Breast epithelium (tissue), 4 donors: ENCODE measurements at regions of chr1 and their contacts with region 1.

Region 1: GRCh38 chr1:12014141-12014991 is 4.9 kb upstream of the MIIP start:
- DNase-seq: no peak
- H3K4me3 ChIP-seq: no peak overlapping the region
- H3K27ac ChIP-seq: peak overlapping the region in 1 of 2 donors; percentile 12
- H3K4me1 ChIP-seq: no peaks in the 10 kb centered on the region
- H3K27me3 ChIP-seq: no peaks in the 10 kb centered on the region
- CTCF ChIP-seq: no peak
- POLR2A ChIP-seq: no peak

Region 2: GRCh38 chr1:12029720-12030339 is 15.5 kb after region 1 on chr1:
- intact Hi-C with region 1: no loop called
- DNase-seq: no peak
- H3K4me3 ChIP-seq: no peak overlapping the region
- H3K27ac ChIP-seq: no peak overlapping the region
- H3K4me1 ChIP-seq: no peaks in the 10 kb centered on the region
- H3K27me3 ChIP-seq: no peaks in the 10 kb centered on the region
- CTCF ChIP-seq: no peak
- POLR2A ChIP-seq: no peak

Region 3: DNA sequence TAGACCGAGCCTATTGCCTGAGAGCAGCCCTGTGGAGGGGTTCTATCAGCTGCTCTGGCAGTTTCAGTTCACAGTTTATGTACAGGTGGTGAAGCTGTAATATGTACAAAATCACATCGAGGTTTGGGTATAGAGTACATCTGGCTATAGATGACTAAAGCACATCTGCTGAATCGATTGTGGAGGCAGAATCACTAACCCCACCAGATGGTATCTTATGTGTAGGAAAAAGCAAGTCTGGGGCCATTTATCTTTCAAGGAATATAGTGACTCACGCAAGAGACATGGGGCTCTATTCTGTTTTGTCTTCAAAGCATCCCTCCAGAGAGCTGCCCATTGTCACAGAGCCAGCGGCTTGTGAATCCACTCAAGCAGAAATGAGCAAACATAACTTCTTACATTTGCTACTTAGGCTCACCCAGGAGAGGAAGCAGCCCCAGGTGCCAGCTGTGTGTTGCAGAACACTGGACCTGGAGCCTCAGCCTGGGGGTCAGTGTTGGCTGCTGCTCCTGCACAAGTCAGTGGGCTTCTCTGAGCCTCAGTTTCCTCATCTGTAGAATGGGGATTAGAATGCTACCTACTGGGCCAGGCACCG is 26.2 kb after region 1 on chr1:
- intact Hi-C with region 1: no loop called
- DNase-seq: no peak
- H3K4me3 ChIP-seq: no peak overlapping the region
- H3K27ac ChIP-seq: no peak overlapping the region
- H3K4me1 ChIP-seq: no peaks in the 10 kb centered on the region
- H3K27me3 ChIP-seq: no peaks in the 10 kb centered on the region
- CTCF ChIP-seq: no peak
- POLR2A ChIP-seq: no peak

Region 4: GRCh38 chr1:12067900-12068821 is 53.8 kb after region 1 on chr1:
- intact Hi-C with region 1: loop called (anchors 2 kb)
- DNase-seq: no peak
- H3K4me3 ChIP-seq: no peak overlapping the region
- H3K27ac ChIP-seq: peak overlapping the region in 1 of 2 donors; percentile 35
- H3K4me1 ChIP-seq: peaks cover 0 to 5% of the 10 kb centered on the region in 2 donors
- H3K27me3 ChIP-seq: peaks cover 3 to 35% of the 10 kb centered on the region in 2 donors
- CTCF ChIP-seq: no peak
- POLR2A ChIP-seq: no peak

Region 5: GRCh38 chr1:12272770-12273169 is 258.4 kb after region 1 on chr1:
- intact Hi-C with region 1: no loop called
- DNase-seq: no peak
- H3K4me3 ChIP-seq: no peak overlapping the region
- H3K27ac ChIP-seq: no peak overlapping the region
- H3K4me1 ChIP-seq: no peaks in the 10 kb centered on the region
- H3K27me3 ChIP-seq: no peaks in the 10 kb centered on the region
- CTCF ChIP-seq: no peak
- POLR2A ChIP-seq: no peak

Region 6: GRCh38 chr1:13494025-13494424 is 1479.7 kb after region 1 on chr1:
- intact Hi-C with region 1: no loop called
- DNase-seq: no peak
- H3K4me3 ChIP-seq: no peak overlapping the region
- H3K27ac ChIP-seq: no peak overlapping the region
- H3K4me1 ChIP-seq: no peaks in the 10 kb centered on the region
- H3K27me3 ChIP-seq: no peaks in the 10 kb centered on the region
- CTCF ChIP-seq: no peak
- POLR2A ChIP-seq: no peak